CD8-positive, alpha-beta T cell (primary cell): ENCODE measurements at regions of chr11 and their contacts with region 1.

Region 1: GRCh38 chr11:60831143-60831500 is 10.8 kb upstream of the CCDC86 start:
- DNase-seq: peak; percentile 60 to 88 (median 83)
- ATAC-seq: peak; percentile 96
- H3K4me3 ChIP-seq: peak overlapping the region in 1 of 2 experiments; percentile 12
- H3K4me3 Mint-ChIP-seq: no peak overlapping the region
- H3K27ac ChIP-seq: no peak overlapping the region
- H3K27ac Mint-ChIP-seq: no peak overlapping the region
- H3K4me1 ChIP-seq: no peaks in the 10 kb centered on the region
- H3K4me1 Mint-ChIP-seq: no peaks in the 10 kb centered on the region
- H3K27me3 ChIP-seq: no peaks in the 10 kb centered on the region
- H3K27me3 Mint-ChIP-seq: peaks cover 6% of the 10 kb centered on the region
- CTCF ChIP-seq: peak; percentile 90

Region 2: GRCh38 chr11:60544076-60544475 is 287.0 kb before region 1 on chr11:
- CTCF ChIA-PET with region 1: no interaction called
- POLR2A ChIA-PET with region 1: no interaction called
- intact Hi-C with region 1: no loop called
- DNase-seq: no peak
- ATAC-seq: no peak
- H3K4me3 ChIP-seq: no peak overlapping the region
- H3K4me3 Mint-ChIP-seq: no peak overlapping the region
- H3K27ac ChIP-seq: no peak overlapping the region
- H3K27ac Mint-ChIP-seq: no peak overlapping the region
- H3K4me1 ChIP-seq: no peaks in the 10 kb centered on the region
- H3K4me1 Mint-ChIP-seq: no peaks in the 10 kb centered on the region
- H3K27me3 ChIP-seq: no peaks in the 10 kb centered on the region
- H3K27me3 Mint-ChIP-seq: peaks cover 17% of the 10 kb centered on the region
- CTCF ChIP-seq: no peak

Region 3: DNA sequence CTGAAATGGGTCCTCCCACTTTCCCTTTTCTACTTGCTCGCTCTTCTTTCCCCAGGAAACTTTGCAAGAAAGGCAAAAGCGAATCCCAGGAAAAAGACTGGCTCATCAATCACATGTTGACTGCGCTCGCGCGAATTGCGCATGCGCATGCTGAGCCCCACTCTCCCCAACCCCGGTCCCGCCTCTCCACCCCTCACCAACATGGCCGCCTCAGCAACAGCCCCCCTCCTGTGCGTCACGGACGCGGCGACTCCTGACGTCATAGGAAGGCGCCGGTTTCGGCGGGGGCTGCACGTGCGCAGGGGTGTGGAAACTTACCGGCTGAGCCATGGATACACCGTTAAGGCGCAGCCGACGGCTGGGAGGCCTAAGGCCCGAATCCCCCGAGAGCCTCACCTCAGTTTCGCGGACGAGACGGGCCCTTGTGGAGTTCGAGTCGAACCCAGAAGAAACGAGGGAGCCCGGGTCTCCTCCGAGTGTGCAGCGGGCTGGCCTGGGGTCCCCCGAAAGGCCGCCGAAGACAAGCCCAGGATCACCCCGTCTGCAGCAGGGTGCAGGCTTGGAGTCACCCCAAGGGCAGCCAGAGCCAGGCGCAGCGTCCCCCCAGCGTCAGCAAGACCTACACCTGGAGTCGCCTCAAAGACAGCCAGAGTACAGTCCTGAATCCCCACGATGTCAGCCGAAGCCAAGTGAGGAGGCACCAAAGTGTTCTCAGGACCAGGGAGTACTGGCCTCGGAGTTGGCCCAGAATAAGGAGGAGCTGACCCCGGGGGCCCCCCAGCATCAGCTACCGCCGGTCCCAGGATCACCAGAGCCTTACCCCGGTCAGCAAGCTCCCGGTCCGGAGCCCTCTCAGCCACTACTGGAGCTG is 10.9 kb after region 1 on chr11 and contains the start of gene CCDC86:
- CTCF ChIA-PET with region 1: interaction called, 20 read pairs
- POLR2A ChIA-PET with region 1: no interaction called
- intact Hi-C with region 1: no loop called
- DNase-seq: peak; percentile 97 to 100 (median 98)
- ATAC-seq: peak; percentile 97
- H3K4me3 ChIP-seq: peak within 1 kb of the TSS; percentile 84 to 93
- H3K4me3 Mint-ChIP-seq: peak within 1 kb of the TSS; percentile 93
- H3K27ac ChIP-seq: peak within 1 kb of the TSS; percentile 71 to 83
- H3K27ac Mint-ChIP-seq: peak within 1 kb of the TSS; percentile 97
- H3K4me1 ChIP-seq: peaks cover 35% of the 10 kb centered on the region
- H3K4me1 Mint-ChIP-seq: peaks cover 46% of the 10 kb centered on the region
- H3K27me3 ChIP-seq: no peaks in the 10 kb centered on the region
- H3K27me3 Mint-ChIP-seq: no peaks in the 10 kb centered on the region
- CTCF ChIP-seq: no peak
- total RNA-seq, gene CCDC86: 10.8 to 11.9 TPM

Region 4: GRCh38 chr11:60871378-60872061 is 40.4 kb after region 1 on chr11:
- CTCF ChIA-PET with region 1: interaction called, 36 read pairs
- POLR2A ChIA-PET with region 1: no interaction called
- intact Hi-C with region 1: no loop called
- DNase-seq: peak in 4 of 9 experiments; percentile 18 to 52 (median 32)
- ATAC-seq: peak; percentile 55
- H3K4me3 ChIP-seq: no peak overlapping the region
- H3K4me3 Mint-ChIP-seq: no peak overlapping the region
- H3K27ac ChIP-seq: no peak overlapping the region
- H3K27ac Mint-ChIP-seq: peak overlapping the region; percentile 22
- H3K4me1 ChIP-seq: peaks cover 47% of the 10 kb centered on the region
- H3K4me1 Mint-ChIP-seq: peaks cover 47% of the 10 kb centered on the region
- H3K27me3 ChIP-seq: no peaks in the 10 kb centered on the region
- H3K27me3 Mint-ChIP-seq: no peaks in the 10 kb centered on the region
- CTCF ChIP-seq: no peak

Region 5: GRCh38 chr11:60899046-60899936 is 68.2 kb after region 1 on chr11:
- CTCF ChIA-PET with region 1: interaction called, 163 read pairs
- POLR2A ChIA-PET with region 1: no interaction called
- intact Hi-C with region 1: loop called (anchors 1 kb)
- DNase-seq: peak in 4 of 9 experiments; percentile 28 to 70 (median 47)
- ATAC-seq: peak; percentile 88
- H3K4me3 ChIP-seq: no peak overlapping the region
- H3K4me3 Mint-ChIP-seq: no peak overlapping the region
- H3K27ac ChIP-seq: no peak overlapping the region
- H3K27ac Mint-ChIP-seq: no peak overlapping the region
- H3K4me1 ChIP-seq: peaks cover 10% of the 10 kb centered on the region
- H3K4me1 Mint-ChIP-seq: peaks cover 16% of the 10 kb centered on the region
- H3K27me3 ChIP-seq: no peaks in the 10 kb centered on the region
- H3K27me3 Mint-ChIP-seq: no peaks in the 10 kb centered on the region
- CTCF ChIP-seq: peak; percentile 99

Region 6: GRCh38 chr11:61129639-61130523 is 298.8 kb after region 1 on chr11:
- CTCF ChIA-PET with region 1: interaction called, 18 read pairs
- POLR2A ChIA-PET with region 1: no interaction called
- intact Hi-C with region 1: loop called (anchors 1 kb)
- DNase-seq: peak; percentile 76 to 95 (median 91)
- ATAC-seq: peak; percentile 91
- H3K4me3 ChIP-seq: no peak overlapping the region
- H3K4me3 Mint-ChIP-seq: peak overlapping the region; percentile 46
- H3K27ac ChIP-seq: no peak overlapping the region
- H3K27ac Mint-ChIP-seq: peak overlapping the region; percentile 64
- H3K4me1 ChIP-seq: peaks cover 17% of the 10 kb centered on the region
- H3K4me1 Mint-ChIP-seq: peaks cover 21% of the 10 kb centered on the region
- H3K27me3 ChIP-seq: no peaks in the 10 kb centered on the region
- H3K27me3 Mint-ChIP-seq: no peaks in the 10 kb centered on the region
- CTCF ChIP-seq: peak; percentile 100

Region 7: DNA sequence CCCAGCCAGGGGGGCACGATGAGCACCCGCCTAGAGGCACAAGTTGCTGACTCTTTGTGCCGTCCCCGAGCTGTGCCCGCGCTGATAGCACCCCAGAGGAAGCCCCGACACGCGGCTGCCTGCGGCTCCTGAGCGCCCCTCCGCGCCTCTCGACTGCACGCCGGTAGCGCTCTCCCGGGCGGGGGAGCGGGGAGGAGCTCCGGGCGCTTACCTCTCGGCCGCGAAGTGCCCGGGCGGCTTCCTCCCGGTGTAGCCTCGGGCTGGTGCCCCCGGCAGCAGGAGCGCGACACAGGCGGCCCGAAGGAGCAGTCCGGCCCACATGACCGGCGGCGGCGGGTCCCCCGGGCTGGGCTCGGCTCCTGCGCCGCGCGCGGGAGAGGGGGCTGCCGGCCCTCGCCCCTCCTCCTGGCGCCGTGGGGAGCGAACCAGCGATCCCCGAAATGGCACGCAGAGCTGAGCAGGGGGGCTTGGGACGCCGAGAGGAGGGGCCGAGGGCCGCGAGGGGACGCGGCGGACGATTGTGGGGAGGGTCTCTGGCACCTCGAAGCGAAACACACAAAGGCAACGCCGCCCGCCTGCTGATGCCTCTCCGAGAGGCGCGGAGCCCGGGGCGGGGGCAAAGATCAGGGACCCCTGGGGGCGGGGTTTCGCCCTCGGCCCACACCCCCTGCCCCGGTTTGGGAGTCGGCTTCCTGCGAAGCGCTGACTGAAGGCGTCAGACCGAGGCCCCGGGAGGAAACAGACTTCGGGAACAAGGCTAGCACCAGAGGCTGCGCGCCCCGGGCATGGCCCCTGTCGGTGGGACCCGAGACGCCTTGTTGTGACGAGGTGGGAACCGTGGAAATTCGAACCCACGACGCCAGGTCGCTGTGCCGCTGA is 463.8 kb after region 1 on chr11 and contains the start of gene VWCE:
- CTCF ChIA-PET with region 1: no interaction called
- POLR2A ChIA-PET with region 1: no interaction called
- intact Hi-C with region 1: loop called (anchors 2 to 5 kb)
- DNase-seq: peak; percentile 42 to 78 (median 66)
- ATAC-seq: peak; percentile 90
- H3K4me3 ChIP-seq: peak within 1 kb of the TSS; percentile 51 to 76
- H3K4me3 Mint-ChIP-seq: peak within 1 kb of the TSS; percentile 79
- H3K27ac ChIP-seq: no peak within 1 kb of the TSS
- H3K27ac Mint-ChIP-seq: no peak within 1 kb of the TSS
- H3K4me1 ChIP-seq: peaks cover 29% of the 10 kb centered on the region
- H3K4me1 Mint-ChIP-seq: peaks cover 36% of the 10 kb centered on the region
- H3K27me3 ChIP-seq: peaks cover 0 to 15% of the 10 kb centered on the region in 2 experiments
- H3K27me3 Mint-ChIP-seq: peaks cover 16% of the 10 kb centered on the region
- CTCF ChIP-seq: no peak
- total RNA-seq, gene VWCE: 1.4 to 1.5 TPM

Region 8: DNA sequence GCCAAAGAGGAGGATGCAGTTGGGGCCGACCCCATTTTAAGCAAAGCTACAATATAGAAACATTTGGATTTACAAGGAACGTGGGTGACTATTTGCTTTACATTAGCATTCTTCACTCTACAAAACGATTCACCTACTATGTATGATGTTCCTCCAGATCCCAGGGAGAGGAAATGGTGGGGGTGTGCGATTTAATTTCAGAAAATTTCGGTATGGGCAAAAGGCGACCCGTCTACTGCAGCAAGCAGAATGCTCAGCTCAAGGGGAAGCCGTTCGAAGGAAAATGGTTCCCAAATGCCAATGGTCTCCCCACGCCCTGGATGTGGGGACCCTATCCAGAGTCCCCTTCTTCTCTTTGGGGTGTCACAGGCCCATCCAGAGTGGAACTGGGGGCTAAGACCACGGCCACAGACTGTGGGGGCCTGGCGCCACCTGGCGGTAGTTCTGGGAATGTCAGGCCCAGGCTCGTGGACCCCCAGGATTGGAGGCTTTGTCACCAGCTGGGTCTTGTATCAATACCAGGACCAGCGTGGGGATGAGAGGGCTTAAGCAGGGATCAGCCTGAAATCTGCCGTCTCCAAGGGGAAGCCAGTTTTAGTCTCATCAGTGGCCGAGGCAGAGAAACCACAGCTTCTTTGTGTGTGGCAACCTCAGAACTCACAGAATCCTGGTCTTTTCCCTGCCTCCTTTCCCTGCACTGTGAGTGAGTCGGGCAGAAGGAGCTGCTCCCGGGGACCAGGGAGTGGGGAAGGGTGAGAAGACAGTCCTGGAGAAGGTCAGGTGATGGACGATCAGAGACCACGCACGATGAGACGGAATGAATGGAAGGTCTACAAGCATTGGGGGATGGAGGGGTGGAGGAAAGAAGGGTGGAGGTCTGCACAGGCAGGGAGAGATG is 685.8 kb after region 1 on chr11:
- CTCF ChIA-PET with region 1: no interaction called
- POLR2A ChIA-PET with region 1: no interaction called
- intact Hi-C with region 1: loop called in 1 of 2 experiments (anchors 5 kb)
- DNase-seq: peak; percentile 39 to 79 (median 63)
- ATAC-seq: peak; percentile 83
- H3K4me3 ChIP-seq: peak overlapping the region; percentile 12 to 32
- H3K4me3 Mint-ChIP-seq: peak overlapping the region; percentile 70
- H3K27ac ChIP-seq: no peak overlapping the region
- H3K27ac Mint-ChIP-seq: no peak overlapping the region
- H3K4me1 ChIP-seq: peaks cover 10% of the 10 kb centered on the region
- H3K4me1 Mint-ChIP-seq: peaks cover 9% of the 10 kb centered on the region
- H3K27me3 ChIP-seq: no peaks in the 10 kb centered on the region
- H3K27me3 Mint-ChIP-seq: peaks cover 27% of the 10 kb centered on the region
- CTCF ChIP-seq: peak; percentile 99